ENCODE measurements at regions of chr11 and their contacts with region 1.

Region 1: GRCh38 chr11:72430741-72431570 is 3.4 kb downstream of the CLPB start:
- DNase-seq: peak; percentile 32
- H3K4me3 Mint-ChIP-seq: no peak overlapping the region
- H3K27ac Mint-ChIP-seq: peak overlapping the region; percentile 14
- H3K4me1 Mint-ChIP-seq: peaks cover 40% of the 10 kb centered on the region
- H3K27me3 Mint-ChIP-seq: no peaks in the 10 kb centered on the region

Region 2: GRCh38 chr11:71908218-71908617 is 522.7 kb before region 1 on chr11:
- intact Hi-C with region 1: no loop called
- DNase-seq: no peak
- H3K4me3 Mint-ChIP-seq: no peak overlapping the region
- H3K27ac Mint-ChIP-seq: no peak overlapping the region
- H3K4me1 Mint-ChIP-seq: peaks cover 13% of the 10 kb centered on the region
- H3K27me3 Mint-ChIP-seq: no peaks in the 10 kb centered on the region

Region 3: DNA sequence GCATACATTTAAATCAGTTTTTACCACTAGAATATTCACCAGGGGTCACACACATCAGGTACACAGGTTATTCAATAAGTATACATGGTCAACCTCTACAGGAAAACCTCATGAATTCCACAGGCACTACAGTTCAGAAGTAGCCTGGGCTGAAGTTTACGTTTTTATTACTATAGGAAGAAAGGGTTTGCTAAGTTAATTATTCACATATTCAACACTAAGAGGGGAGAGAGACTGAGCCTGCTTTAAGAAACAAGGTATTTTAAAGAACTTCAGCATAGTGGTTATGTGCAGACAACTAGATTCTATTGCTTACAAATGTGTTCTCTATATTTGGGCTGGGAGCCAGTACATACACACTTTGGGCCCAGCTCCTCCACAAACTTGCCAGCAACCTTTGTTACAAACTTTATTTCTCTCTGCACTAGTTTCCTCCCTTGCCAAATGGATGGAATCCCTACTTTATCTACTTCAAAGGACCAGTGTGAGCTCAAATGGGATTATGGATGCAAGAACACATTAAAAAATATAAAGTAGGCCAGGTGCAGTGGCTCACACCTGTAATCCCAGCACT is 400.4 kb before region 1 on chr11:
- intact Hi-C with region 1: loop called (anchors 5 kb)
- DNase-seq: no peak
- H3K4me3 Mint-ChIP-seq: no peak overlapping the region
- H3K27ac Mint-ChIP-seq: no peak overlapping the region
- H3K4me1 Mint-ChIP-seq: peaks cover 33% of the 10 kb centered on the region
- H3K27me3 Mint-ChIP-seq: no peaks in the 10 kb centered on the region

Region 4: DNA sequence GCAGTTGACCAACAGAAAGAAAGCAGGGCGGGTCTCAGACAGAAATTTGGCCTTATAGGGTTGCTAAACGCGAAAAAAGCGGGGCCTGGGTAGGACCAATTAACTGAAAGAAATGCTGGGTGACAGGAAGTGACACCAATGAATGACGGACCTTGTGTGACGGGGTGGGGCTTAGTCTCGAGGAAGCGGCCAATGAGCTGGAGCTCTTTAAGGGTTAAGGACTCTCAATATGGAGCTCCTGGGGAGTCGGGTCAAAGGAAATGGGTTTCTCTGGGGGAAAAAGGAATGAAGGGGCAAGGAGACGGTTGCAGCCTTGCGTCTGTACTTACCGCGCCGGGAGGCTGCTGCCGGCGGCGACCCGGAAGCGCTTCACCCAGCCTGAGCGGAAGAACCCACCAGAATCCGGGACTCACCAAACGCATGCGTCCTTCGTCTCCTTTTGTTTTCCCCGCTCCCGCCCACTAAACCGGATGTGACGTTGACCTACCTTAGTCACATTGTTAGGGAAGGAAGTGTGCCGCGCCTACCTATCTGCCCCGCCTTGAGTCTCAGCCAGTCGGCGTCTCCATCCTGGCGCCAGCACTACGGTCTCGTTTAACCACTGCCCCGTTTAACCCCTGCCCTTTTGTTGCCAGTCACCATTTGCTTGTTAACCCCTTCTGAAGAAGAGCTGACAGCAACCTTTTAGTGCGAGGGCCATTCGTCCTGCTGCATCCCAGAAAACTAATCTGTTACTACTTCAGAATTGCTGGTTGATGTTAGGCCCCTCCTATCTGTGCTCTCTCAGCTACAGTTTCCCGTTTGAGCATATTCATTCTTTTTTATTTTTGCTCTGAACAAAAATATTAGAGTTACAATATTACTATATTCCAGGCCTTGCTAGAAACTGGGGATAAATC is 318.4 kb before region 1 on chr11 and contains the start of gene ANAPC15:
- intact Hi-C with region 1: loop called (anchors 1 kb)
- DNase-seq: peak; percentile 97
- H3K4me3 Mint-ChIP-seq: peak within 1 kb of the TSS; percentile 90
- H3K27ac Mint-ChIP-seq: peak within 1 kb of the TSS; percentile 98
- H3K4me1 Mint-ChIP-seq: peaks cover 28% of the 10 kb centered on the region
- H3K27me3 Mint-ChIP-seq: no peaks in the 10 kb centered on the region
- total RNA-seq, gene ANAPC15: 49.4 and 51.9 TPM in 2 replicates

Region 5: DNA sequence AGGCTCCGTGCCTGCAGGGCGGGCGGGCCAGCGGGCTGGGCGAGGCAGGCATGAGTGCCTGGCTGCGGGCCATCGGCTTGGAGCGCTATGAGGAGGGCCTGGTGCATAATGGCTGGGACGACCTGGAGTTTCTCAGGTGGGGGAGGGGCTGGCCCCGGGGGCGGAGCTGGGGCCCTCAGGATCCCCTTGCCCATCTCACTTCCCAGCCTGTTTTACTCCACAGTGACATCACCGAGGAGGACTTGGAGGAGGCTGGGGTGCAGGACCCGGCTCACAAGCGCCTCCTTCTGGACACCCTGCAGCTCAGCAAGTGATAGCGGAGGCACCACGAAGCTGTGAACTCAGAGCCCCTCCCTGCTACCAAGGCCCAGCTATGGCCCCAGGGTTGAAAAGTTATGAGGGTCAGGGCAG is 192.9 kb before region 1 on chr11:
- intact Hi-C with region 1: loop called (anchors 1 kb)
- DNase-seq: no peak
- H3K4me3 Mint-ChIP-seq: no peak overlapping the region
- H3K27ac Mint-ChIP-seq: no peak overlapping the region
- H3K4me1 Mint-ChIP-seq: peaks cover 10% of the 10 kb centered on the region
- H3K27me3 Mint-ChIP-seq: peaks cover 37% of the 10 kb centered on the region

Region 6: GRCh38 chr11:72333661-72334060 is 97.3 kb before region 1 on chr11:
- intact Hi-C with region 1: loop called (anchors 1 kb)
- DNase-seq: peak; percentile 47
- H3K4me3 Mint-ChIP-seq: no peak overlapping the region
- H3K27ac Mint-ChIP-seq: peak overlapping the region; percentile 25
- H3K4me1 Mint-ChIP-seq: peaks cover 35% of the 10 kb centered on the region
- H3K27me3 Mint-ChIP-seq: no peaks in the 10 kb centered on the region

Region 7: DNA sequence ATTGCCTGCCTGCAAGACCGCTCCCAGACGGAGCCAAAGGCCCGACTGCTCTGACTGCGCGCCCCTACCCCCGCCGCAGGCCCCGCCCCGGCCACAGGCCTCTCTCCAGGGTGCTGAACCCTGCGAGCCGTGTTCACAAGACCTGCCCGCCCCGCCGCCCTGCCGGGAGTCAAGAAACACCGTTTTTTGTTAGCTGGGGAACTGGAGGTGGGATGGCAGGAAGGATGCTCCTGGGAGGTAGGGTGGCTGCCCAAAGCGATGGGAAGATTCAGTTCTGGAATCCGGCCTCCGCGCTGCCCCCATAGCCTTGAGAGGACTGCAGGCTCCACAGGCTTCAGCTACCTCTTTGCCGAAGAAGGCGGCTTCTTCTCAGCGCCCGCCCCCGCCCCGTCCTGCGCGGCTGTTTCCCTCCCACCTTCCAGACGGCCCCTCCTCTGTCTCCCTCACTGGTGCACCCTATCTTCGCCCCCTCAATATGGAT is 245.9 kb after region 1 on chr11:
- intact Hi-C with region 1: no loop called
- DNase-seq: peak; percentile 66
- H3K4me3 Mint-ChIP-seq: no peak overlapping the region
- H3K27ac Mint-ChIP-seq: no peak overlapping the region
- H3K4me1 Mint-ChIP-seq: peaks cover 10% of the 10 kb centered on the region
- H3K27me3 Mint-ChIP-seq: peaks cover 55% of the 10 kb centered on the region